RWPE1 (cell line): ENCODE measurements at regions of chr6 and their contacts with region 1.

Region 1: DNA sequence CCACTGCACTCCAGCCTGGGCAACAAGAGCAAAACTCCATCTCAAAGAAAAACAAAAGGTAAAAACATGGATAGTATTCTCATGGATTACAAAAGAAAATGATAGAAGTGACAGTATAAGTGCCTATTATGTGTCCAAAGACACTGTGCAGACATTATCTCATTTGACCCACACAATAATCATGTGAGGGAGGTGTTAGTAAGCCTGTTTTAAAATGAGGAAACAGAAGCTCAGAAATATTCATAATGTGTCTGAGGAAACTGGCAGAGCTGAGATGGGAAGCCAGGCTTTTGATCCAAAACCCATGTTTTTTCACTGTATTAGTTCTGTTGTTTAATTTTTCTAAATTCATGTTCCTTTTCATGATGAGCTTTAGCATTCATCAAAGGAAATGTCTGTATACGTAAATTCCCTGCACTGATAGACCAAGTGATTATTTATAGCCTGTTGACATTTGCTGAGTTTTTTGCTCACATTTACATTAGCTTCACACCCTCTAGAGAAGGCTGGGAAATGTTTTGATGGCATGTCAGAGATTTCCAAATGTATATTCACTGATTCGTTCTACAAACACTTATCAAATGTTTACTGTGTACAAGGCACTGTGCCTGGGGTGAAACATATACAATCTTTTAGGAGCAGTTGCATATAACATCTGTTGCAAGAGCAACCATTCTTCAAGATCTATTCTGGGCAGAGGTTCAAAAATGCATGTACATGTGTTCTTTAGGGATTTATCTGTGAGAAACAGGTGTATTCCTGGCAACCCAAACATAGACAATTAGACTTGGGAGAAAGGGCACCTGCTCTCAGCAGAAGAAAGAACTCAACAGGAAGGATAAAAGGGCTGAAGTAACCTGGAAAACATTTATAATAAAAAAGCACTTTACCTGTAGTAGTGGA is 331.5 kb downstream of the SAMD5 start:
- DNase-seq: no peak
- H3K27ac ChIP-seq: no peak overlapping the region
- CTCF ChIP-seq: no peak

Region 2: GRCh38 chr6:147559006-147559405 is 281.0 kb before region 1 on chr6:
- CTCF ChIA-PET with region 1: no interaction called
- POLR2A ChIA-PET with region 1: no interaction called
- DNase-seq: no peak
- H3K27ac ChIP-seq: no peak overlapping the region
- CTCF ChIP-seq: no peak

Region 3: GRCh38 chr6:147578883-147579282 is 261.1 kb before region 1 on chr6:
- CTCF ChIA-PET with region 1: interaction called, 12 read pairs
- POLR2A ChIA-PET with region 1: no interaction called
- DNase-seq: no peak
- H3K27ac ChIP-seq: no peak overlapping the region
- CTCF ChIP-seq: no peak

Region 4: DNA sequence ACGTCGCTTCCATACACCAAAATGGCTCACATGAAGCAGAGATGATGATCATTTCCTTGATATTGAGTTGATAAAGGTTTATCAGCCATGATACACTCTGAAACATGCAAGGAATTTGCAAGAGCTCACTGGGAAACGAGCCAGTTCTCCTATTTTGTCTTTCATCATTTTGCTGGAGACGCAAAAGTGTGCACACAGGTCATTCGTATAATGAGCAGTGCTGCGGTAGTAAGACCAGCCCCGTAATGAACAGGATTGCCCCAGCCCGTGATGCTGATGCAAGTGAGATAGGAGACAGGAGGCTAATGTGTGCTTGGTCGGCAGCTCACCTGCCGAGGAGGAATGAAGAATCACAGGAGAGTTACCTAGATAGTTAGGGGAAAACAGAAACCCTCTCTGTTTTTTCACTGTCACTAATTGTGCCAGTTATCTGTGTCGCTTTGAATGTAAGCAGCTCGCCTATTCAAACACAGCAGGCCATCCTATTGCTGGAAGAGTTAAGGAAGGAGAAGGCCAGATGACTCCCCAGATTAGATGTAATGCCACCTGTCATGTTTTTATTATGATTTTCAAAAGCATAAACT is 60.4 kb after region 1 on chr6:
- CTCF ChIA-PET with region 1: no interaction called
- POLR2A ChIA-PET with region 1: no interaction called
- DNase-seq: no peak
- H3K27ac ChIP-seq: no peak overlapping the region
- CTCF ChIP-seq: no peak